ENCODE measurements at regions of chr12 and their contacts with region 1.

Region 1: DNA sequence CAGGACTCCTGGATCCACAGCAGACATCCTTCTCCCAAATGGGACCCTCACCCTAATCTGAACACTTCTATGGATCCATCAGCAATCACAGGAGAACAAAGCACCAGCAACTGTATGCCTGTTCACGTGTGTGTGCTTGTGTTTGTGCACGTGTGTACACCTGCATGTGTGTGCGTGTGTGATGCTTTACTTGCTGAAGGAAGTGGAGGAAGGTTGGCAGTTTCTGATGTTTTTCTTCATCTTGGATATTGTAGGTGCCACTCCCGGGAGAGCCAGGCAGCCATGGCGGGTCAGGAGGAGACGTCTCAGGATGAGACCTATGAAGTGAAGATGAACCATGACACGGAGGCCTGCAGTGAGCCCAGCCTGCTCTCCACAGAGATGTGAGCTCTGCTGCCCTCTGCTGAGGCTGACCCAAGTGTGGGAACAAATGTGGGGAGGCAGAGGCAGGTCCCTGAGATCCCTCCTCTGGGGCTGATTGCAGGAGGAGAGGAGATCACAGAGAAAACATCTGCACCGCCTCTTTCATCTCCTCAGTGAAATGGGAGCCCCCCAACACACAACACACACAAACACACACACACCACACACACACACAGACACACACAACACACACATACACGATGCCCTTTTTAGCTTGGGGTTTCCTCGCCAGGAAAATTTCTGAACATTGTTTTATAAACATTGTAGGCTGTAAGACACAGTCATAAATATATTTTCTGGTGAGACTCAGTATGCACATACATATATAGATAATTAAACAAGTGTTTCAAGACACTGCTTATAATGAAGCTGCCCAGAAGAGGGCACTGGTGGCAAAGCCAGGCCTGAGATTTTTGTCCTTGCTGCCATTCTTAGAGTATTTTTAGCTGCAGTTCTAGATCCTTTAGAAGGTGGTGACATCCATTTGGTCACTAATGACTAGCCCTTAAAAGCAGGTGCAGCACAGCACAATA is 112.2 kb upstream of the FKBP4 start:
- DNase-seq: peak in 2 of 4 donors; percentile 30 to 47
- ATAC-seq: no peak
- H3K4me3 ChIP-seq: no peak overlapping the region
- H3K27ac ChIP-seq: no peak overlapping the region
- H3K4me1 ChIP-seq: no peaks in the 10 kb centered on the region
- H3K27me3 ChIP-seq: no peaks in the 10 kb centered on the region
- CTCF ChIP-seq: peak in 5 of 7 experiments; percentile 26 to 64 (median 52)
- POLR2A ChIP-seq: no peak

Region 2: GRCh38 chr12:2783936-2784600 is 101.5 kb after region 1 on chr12:
- intact Hi-C with region 1: loop called (anchors 10 kb)
- DNase-seq: peak; percentile 63 to 78 (median 74)
- ATAC-seq: peak; percentile 96
- H3K4me3 ChIP-seq: no peak overlapping the region
- H3K27ac ChIP-seq: no peak overlapping the region
- H3K4me1 ChIP-seq: peaks cover 12% of the 10 kb centered on the region
- H3K27me3 ChIP-seq: no peaks in the 10 kb centered on the region
- CTCF ChIP-seq: peak; percentile 85 to 93 (median 89)
- POLR2A ChIP-seq: no peak

Measured in body of pancreas (tissue), 4 donors.